ENCODE measurements at regions of chr12 and their contacts with region 1.

Region 1: GRCh38 chr12:47837190-47838171 is 17.8 kb upstream of the HDAC7 start:
- H3K4me3 ChIP-seq: no peak overlapping the region
- H3K27ac ChIP-seq: no peak overlapping the region
- H3K4me1 ChIP-seq: no peaks in the 10 kb centered on the region
- CTCF ChIP-seq: peak; percentile 67; the same call in 1 of the 2 replicates

Region 2: GRCh38 chr12:47705566-47706425 is 131.7 kb before region 1 on chr12 and contains the start of gene RPAP3:
- CTCF ChIA-PET with region 1: interaction called, 271 read pairs
- POLR2A ChIA-PET with region 1: interaction called, 4 read pairs
- H3K4me3 ChIP-seq: peak within 1 kb of the TSS; percentile 97
- H3K27ac ChIP-seq: peak within 1 kb of the TSS; percentile 44; the same call in 1 of the 2 replicates
- H3K4me1 ChIP-seq: no peaks in the 10 kb centered on the region
- CTCF ChIP-seq: peak; percentile 70

Region 3: DNA sequence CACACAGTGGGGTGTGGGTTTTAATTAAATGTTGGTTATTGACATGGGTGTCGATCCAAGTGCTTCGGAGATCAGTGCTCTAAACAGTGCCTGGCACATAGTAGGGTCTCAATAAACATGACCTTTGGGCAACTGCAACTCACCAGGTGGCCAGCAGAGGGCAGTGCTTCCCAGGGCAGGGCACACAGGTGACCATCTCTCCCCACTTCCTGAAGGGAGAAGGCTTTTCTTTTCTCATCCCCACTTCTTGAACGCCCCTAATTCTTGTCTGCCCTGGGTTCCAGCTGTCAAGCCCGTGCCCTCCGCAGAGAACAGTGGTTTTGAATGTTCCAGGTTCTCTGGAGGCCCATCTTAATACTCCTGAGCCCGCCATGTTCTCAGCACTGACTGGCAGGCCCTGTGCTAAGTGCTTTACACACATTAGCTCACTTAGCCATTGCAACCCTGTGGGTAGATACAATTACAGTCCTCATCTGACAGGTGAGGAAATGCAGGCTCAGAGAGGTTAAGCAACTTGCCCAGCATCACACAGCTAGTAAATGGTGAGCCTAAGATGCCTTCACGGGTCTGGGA is 95.1 kb before region 1 on chr12:
- CTCF ChIA-PET with region 1: interaction called, 264 read pairs
- POLR2A ChIA-PET with region 1: interaction called, 9 read pairs
- H3K4me3 ChIP-seq: no peak overlapping the region
- H3K27ac ChIP-seq: no peak overlapping the region
- H3K4me1 ChIP-seq: no peaks in the 10 kb centered on the region
- CTCF ChIP-seq: peak; percentile 82

Region 4: DNA sequence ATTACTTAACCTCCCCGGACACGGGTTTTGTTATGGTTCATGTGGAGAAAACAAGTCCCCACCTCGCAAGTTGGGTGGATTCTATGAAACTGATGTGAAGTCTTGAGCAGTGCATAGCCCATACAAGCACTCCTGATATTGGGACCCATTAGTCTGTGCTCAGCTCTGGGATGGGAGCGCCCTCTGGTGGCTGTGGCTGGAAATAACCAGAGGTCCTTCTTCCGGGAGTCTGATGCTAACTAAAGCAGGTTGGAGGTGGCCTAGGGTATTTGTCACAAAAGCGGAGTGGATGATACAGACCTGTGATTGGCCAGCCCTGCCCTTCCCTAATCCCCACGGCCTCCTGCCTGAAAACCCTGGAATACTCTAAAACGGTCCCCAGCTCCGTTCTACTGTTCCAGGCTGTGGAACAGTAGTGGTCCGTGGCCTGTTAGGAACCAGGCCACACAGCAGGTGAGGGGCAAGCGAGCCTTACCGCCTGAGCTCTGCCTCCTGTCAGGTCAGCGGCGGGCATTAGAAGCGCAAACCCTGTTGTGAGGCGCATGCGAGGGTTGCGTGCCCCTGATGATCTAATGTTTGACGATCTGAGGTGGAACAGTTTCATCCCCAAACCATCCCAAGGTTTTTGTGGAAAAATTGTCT is 58.1 kb before region 1 on chr12:
- CTCF ChIA-PET with region 1: interaction called, 182 read pairs
- POLR2A ChIA-PET with region 1: interaction called, 10 read pairs
- H3K4me3 ChIP-seq: no peak overlapping the region
- H3K27ac ChIP-seq: no peak overlapping the region
- H3K4me1 ChIP-seq: no peaks in the 10 kb centered on the region; the same call in 1 of the 2 replicates
- CTCF ChIP-seq: peak; percentile 90

Region 5: GRCh38 chr12:47819896-47820630 is 17.4 kb before region 1 on chr12 and contains the start of gene HDAC7:
- CTCF ChIA-PET with region 1: interaction called, 91 read pairs
- POLR2A ChIA-PET with region 1: interaction called, 5 read pairs
- H3K4me3 ChIP-seq: peak within 1 kb of the TSS; percentile 67
- H3K27ac ChIP-seq: peak within 1 kb of the TSS; percentile 89
- H3K4me1 ChIP-seq: peaks cover 3% of the 10 kb centered on the region; the same call in 1 of the 2 replicates
- CTCF ChIP-seq: no peak; the same call in 1 of the 2 replicates

Region 6: DNA sequence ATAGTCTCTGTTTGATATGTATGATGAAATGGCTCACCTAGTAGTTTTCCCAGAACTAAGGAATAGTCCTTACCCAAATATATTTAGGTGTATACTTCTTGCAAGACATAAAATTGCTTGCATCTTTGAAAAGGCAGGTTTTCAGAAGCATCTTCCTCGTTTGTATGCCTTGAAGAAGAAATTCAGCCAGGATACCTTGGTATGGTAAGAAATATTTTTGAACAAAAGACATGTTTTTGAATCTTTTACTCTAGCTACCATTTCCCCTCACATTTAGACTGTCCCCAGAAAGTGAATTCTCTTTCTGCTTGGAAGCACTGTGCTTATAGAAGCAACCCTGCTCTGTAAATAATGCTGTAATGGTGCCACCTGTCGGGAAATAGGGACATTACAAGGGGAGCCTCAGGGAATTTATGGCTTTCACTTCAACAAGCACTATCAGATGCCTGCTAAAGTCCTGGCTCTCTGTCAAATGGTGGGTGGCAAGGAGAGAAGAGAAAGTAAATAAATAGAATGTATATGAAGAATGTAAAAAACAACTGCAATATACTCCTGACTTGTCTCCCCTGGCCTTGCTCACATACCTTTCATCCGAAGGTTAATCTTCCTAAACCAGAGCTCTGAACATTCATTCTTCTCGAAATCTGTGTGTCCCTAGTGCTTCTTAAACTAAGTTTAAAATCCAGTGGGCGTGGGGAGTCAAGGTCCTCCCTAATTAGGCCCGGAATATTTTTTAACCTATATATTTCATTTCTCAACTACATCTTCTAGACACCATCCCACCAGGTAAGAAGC is 352.0 kb after region 1 on chr12:
- CTCF ChIA-PET with region 1: interaction called, 16 read pairs
- POLR2A ChIA-PET with region 1: no interaction called
- H3K4me3 ChIP-seq: no peak overlapping the region
- H3K27ac ChIP-seq: no peak overlapping the region
- H3K4me1 ChIP-seq: no peaks in the 10 kb centered on the region
- CTCF ChIP-seq: peak; percentile 29; the same call in 1 of the 2 replicates

Region 7: GRCh38 chr12:48261773-48262172 is 424.3 kb after region 1 on chr12:
- CTCF ChIA-PET with region 1: no interaction called
- POLR2A ChIA-PET with region 1: no interaction called
- H3K4me3 ChIP-seq: no peak overlapping the region
- H3K27ac ChIP-seq: no peak overlapping the region
- H3K4me1 ChIP-seq: no peaks in the 10 kb centered on the region
- CTCF ChIP-seq: no peak

Measured in HEK293 (cell line).